ENCODE measurements at regions of chr3 and their contacts with region 1.

Region 1: GRCh38 chr3:160343132-160343531 is 55.9 kb downstream of the IFT80 start:
- DNase-seq: no peak
- ATAC-seq: no peak

Region 2: DNA sequence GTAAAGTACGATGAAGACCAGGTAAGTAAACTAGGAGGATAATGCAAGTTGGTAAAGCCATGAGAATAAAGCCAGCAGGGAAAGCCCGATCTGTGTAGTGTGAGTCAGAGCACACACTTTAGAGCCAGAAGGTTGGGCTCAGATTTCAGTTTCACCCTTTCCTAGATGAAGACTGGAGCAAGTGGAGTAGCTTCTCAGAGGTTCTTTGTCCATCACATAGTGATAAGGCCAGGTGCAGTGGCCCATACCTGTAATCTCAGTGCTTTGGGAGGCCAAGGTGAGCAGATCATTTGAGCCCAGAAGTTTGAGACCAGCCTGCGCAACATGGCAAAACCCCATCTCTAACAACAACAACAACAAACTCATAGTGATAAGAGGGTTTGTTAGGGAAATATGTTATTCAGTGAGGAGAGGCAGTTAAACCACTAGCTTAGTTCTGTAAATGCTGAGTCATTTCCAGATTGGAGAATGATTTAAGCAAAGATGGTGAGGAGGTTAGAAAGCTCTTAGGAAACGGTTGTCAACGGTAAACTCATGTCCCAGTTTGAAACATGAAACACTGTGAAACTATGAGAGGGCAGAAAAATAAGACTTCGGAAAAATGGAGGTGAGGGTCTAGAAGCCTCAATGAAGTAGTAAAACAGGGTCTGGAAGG is 315.5 kb before region 1 on chr3:
- intact Hi-C with region 1: loop called (anchors 1 kb)
- DNase-seq: no peak
- ATAC-seq: no peak

Region 3: GRCh38 chr3:160163229-160163878 is 179.8 kb before region 1 on chr3:
- intact Hi-C with region 1: loop called (anchors 5 kb)
- DNase-seq: no peak
- ATAC-seq: no peak